ENCODE measurements at regions of chr4 and their contacts with region 1.

Region 1: DNA sequence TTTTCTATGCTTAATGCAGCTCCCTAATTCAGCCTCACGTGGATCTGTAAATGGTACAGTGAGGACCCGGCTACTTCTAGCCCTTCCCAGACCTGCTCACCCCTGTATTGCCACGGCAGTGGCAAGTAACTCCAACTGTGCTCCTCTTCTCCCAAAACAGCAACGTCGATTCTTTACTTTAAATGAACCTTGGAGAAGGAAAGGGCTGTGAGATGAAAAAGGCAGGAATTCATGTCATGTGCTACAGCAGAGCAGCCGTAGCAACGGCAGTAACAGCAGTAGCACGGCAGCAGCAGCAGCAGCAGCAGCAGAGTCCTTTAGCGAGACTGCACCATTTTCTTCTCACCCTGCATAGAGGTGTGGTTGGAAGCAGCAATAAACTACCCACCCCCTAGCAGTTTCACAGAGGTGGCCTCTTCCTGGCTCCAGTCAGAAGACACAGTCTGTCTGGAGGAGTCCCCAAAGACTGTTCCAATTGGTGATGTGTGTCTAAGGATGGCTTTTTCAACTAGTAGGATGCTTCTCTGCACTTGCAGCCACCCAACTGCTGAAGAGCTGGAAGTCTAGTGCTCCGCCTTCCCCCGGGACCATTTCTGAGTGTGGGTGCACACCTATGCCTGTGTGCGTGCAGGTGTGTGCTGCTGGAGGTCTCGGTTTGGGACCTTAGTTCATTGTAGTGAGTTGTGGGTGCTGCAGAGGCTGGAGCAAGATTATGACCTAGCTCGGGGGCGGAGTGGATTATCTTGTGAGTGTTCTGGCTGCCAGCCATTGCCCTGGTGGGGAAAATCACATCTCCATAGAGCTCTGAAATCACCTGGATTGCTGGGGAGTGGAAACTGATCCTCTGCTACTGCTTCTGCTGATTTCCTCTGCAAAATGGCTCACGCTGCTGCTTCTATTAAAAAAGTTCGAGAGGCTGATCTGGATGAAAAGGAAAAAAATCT is 67.2 kb downstream of the ANK2 start:
- DNase-seq: no peak
- ATAC-seq: peak; percentile 41 to 60

Region 2: DNA sequence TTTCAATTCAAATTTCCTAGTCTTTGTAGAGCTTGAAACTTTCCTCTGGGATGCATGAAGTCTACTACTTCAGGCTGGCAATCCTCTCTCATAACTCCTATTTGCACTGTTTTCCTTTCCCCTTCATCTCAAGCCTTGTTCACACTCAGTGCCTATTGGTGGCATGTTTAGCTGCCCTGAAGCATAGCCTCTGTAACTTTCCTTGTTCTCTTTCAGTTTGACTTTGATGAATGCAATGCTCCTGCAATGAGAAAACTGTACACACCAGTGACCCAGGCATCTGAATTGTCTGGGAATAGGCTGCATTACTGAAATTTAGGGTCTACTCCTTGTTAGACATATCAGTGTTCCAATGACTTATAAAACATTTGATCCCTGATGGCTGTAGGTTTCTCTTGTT is 14.4 kb after region 1 on chr4:
- intact Hi-C with region 1: no loop called
- DNase-seq: no peak
- ATAC-seq: no peak

Region 3: GRCh38 chr4:113146876-113147358 is 30.2 kb after region 1 on chr4:
- intact Hi-C with region 1: loop called in 1 of 2 experiments (anchors 5 kb)
- DNase-seq: peak; percentile 29
- ATAC-seq: peak; percentile 47 to 75

Region 4: DNA sequence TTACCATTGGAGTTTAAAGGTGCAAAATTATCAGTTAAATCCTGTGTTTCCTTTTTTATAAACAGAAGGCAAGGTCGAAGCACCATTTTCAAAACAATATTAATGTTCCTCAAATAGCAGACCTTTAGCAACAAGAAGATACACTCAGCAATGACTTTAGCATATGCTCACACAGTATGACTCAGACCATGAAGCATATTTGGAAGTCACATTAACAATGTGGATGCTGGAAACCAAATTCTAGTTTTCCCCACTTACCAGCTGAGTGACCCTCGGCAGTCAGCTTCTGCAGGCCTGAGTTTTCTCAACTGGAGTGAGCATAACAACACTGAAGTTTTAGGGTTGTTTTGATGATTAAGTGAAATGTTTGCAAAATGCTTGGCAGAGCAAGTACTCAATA is 63.3 kb after region 1 on chr4:
- intact Hi-C with region 1: loop called in 1 of 2 experiments (anchors 10 kb)
- DNase-seq: no peak
- ATAC-seq: peak in 1 of 2 donors; percentile 48